Activated naive CD4-positive, alpha-beta T cell treated with anti-CD3 and anti-CD28 coated beads for 36 hours (primary cell): ENCODE measurements at regions of chr5 and their contacts with region 1.

Region 1: DNA sequence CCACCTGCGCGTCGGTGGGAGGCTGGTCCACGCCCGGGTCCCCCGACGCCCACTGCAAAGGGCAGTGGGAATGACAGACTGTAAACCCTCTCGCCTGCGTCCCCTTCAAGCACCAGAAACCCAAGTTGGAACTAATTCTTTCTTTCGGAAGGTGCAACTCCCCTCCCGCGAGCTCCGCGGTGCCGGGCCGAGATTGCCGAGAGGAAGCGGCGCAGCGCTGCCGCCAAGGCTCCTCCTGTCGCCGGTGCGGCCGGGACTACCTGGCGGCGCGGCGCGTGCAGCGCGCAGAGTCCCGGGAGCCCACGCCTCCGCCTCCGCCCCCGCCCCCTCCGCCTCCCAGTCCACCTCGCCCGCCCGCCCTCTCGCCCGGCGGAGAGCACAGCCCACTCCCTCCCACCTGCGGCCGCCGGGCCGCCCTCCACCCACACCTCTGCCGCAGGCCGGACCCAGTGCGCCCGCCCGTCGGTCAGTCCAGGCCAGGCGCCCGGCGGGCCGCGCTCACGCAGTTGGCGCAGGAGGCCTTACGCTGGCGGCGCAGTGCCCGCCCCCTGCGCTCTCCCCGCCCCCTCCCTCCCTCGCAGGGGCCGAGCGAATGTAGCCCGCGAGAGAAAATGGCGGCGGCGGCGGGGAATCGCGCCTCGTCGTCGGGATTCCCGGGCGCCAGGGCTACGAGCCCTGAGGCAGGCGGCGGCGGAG is at the start of gene MAP3K1:
- DNase-seq: peak; percentile 74
- H3K4me3 Mint-ChIP-seq: peak within 1 kb of the TSS; percentile 88
- H3K27ac Mint-ChIP-seq: peak within 1 kb of the TSS; percentile 87
- H3K4me1 Mint-ChIP-seq: peaks cover 34% of the 10 kb centered on the region
- H3K27me3 Mint-ChIP-seq: no peaks in the 10 kb centered on the region
- total RNA-seq, gene MAP3K1: 18.2 to 19.2 TPM

Region 2: GRCh38 chr5:55988979-55989638 is 826.0 kb before region 1 on chr5:
- CTCF ChIA-PET with region 1: no interaction called
- intact Hi-C with region 1: loop called (anchors 5 kb)
- DNase-seq: no peak
- H3K4me3 Mint-ChIP-seq: peak overlapping the region; percentile 100
- H3K27ac Mint-ChIP-seq: peak overlapping the region; percentile 82
- H3K4me1 Mint-ChIP-seq: peaks cover 80% of the 10 kb centered on the region
- H3K27me3 Mint-ChIP-seq: no peaks in the 10 kb centered on the region

Region 3: DNA sequence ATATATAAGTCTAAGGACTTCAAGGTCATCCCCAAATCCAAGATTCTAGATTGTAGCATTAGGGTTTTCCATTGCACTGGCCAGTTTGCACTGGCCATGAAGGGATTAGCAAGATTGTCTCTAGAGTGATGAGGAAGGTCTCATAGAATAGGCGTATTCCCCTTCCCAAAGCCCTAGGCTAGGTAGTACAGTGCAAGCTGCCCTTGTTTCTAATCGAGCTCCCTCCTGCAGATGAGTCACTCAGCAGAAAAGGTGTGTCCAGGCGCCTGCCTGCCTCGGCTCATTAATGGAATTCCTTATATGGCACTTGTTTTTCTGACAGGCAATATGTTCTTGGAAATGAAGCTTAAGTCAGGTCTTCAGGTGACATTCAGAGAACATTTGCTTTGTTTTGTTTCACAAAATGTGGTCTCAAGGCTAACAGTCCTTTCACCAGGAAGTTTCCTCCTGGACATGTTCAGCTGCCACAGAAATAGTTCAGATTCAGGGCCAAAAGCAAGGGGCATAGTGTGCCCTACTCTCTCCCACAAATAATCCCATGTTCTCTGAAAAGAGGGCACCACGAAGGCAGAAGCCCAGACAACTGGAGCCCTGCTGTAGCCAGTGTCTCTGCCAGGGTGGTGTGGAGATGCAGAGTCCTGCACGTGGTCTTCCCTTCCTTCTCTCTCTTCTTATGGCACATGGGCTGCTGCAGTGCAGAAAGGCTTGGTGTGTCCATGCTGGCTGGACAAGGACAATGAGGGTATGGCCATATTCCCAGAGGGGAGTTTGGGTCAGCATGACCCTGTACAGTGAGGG is 280.9 kb before region 1 on chr5:
- CTCF ChIA-PET with region 1: no interaction called
- intact Hi-C with region 1: loop called (anchors 5 kb)
- DNase-seq: peak; percentile 59
- H3K4me3 Mint-ChIP-seq: no peak overlapping the region
- H3K27ac Mint-ChIP-seq: no peak overlapping the region
- H3K4me1 Mint-ChIP-seq: peaks cover 14% of the 10 kb centered on the region
- H3K27me3 Mint-ChIP-seq: no peaks in the 10 kb centered on the region

Region 4: DNA sequence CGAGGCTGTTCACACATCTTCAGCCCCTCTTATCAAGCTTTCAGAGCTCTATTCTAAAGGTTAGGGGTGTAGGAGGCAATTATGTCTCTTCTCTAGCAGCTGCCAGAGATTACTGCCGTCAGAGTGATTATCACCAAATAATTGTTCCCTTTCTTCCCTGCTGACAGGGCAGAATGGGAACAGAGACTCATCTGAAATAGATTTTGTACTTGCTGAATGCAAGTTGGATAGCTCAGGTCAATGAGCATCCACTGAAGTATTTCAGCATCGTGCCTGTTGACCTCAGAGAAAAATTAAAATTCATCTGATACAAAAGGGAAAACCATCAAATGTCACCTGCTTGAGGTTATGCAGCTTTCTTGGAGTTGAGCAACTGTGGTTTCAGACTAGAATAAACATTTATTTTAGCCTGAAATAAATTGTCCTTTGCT is 213.5 kb before region 1 on chr5:
- CTCF ChIA-PET with region 1: no interaction called
- intact Hi-C with region 1: no loop called
- DNase-seq: no peak
- H3K4me3 Mint-ChIP-seq: no peak overlapping the region
- H3K27ac Mint-ChIP-seq: no peak overlapping the region
- H3K4me1 Mint-ChIP-seq: peaks cover 17% of the 10 kb centered on the region
- H3K27me3 Mint-ChIP-seq: no peaks in the 10 kb centered on the region

Region 5: DNA sequence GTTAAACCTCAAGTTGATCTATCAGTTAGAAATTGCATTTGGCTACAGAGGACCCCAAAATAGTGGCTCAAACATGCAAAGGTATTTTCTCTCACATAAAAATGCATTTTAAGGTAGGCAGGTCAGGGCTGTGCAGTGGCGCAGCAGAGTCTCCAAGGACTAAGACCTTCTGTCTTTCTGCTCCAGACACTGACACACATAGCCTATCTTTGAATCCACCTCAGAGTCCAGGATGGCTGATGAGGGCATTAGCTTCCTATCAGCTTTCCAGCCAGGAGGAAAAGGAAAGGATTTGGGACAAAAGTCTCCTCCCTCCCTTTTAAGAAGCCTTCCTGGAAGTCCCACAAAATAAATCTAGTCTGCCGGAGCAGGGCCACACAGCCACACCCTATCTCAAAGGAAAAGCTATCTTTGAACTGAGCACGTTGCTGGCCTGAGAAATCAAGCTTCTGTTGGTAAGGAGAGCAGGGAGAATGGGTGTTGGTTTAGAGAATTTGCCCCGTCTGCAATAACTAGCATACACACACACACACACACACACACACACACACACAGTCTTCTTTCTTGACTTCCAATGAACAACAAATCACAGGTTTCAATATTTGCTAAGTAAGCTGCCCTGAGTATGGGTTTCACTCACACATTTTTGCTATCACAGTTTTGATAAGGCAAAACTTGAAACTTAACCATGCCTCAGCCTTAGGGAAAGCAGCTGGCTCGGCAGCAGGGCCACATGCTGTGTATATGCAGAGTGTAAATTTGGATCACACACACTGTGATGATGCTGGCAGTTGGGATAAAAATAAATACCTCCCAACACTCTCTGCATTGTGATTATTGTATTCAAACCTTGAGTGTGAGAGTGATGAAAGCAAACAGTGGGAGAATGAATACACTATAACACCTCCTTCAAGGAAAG is 116.4 kb before region 1 on chr5:
- CTCF ChIA-PET with region 1: no interaction called
- intact Hi-C with region 1: loop called (anchors 2 kb)
- DNase-seq: no peak
- H3K4me3 Mint-ChIP-seq: no peak overlapping the region
- H3K27ac Mint-ChIP-seq: no peak overlapping the region
- H3K4me1 Mint-ChIP-seq: peaks cover 65% of the 10 kb centered on the region
- H3K27me3 Mint-ChIP-seq: no peaks in the 10 kb centered on the region

Region 6: DNA sequence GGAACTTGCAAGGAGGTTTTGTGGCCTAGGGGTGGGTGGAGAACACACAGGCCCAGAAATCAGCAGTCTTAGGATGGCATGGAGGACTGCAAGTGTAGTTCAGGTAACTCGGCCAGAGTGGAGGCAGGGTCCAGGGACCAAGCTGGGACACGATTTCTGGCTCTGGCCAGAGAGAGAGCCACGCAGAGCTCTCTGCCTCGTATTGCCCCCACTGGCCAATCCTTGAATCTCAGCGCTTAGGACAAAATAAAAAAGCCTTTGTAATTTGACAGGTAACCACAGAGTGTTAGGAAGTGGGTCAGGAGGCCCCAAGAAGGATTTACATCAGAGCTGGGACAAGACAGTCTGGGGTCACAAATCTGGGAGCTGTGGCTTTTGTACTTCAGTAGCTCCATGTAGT is 11.9 kb after region 1 on chr5:
- CTCF ChIA-PET with region 1: interaction called, 5 read pairs
- intact Hi-C with region 1: loop called (anchors 1 kb)
- DNase-seq: peak; percentile 30
- H3K4me3 Mint-ChIP-seq: peak overlapping the region; percentile 4
- H3K27ac Mint-ChIP-seq: peak overlapping the region; percentile 79
- H3K4me1 Mint-ChIP-seq: peaks cover 91% of the 10 kb centered on the region
- H3K27me3 Mint-ChIP-seq: no peaks in the 10 kb centered on the region

Region 7: GRCh38 chr5:56909294-56910209 is 94.4 kb after region 1 on chr5 and contains the start of gene SETD9:
- CTCF ChIA-PET with region 1: no interaction called
- intact Hi-C with region 1: loop called (anchors 1 kb)
- DNase-seq: peak; percentile 97
- H3K4me3 Mint-ChIP-seq: peak within 1 kb of the TSS; percentile 81
- H3K27ac Mint-ChIP-seq: peak within 1 kb of the TSS; percentile 94
- H3K4me1 Mint-ChIP-seq: peaks cover 19% of the 10 kb centered on the region
- H3K27me3 Mint-ChIP-seq: no peaks in the 10 kb centered on the region
- total RNA-seq, gene SETD9: 5.8 to 8.6 TPM

Region 8: GRCh38 chr5:57072218-57072901 is 257.2 kb after region 1 on chr5:
- CTCF ChIA-PET with region 1: no interaction called
- intact Hi-C with region 1: no loop called
- DNase-seq: no peak
- H3K4me3 Mint-ChIP-seq: no peak overlapping the region
- H3K27ac Mint-ChIP-seq: no peak overlapping the region
- H3K4me1 Mint-ChIP-seq: no peaks in the 10 kb centered on the region
- H3K27me3 Mint-ChIP-seq: peaks cover 5% of the 10 kb centered on the region